CD8-positive, alpha-beta T cell (primary cell): ENCODE measurements at regions of chr2 and their contacts with region 1.

Region 1: DNA sequence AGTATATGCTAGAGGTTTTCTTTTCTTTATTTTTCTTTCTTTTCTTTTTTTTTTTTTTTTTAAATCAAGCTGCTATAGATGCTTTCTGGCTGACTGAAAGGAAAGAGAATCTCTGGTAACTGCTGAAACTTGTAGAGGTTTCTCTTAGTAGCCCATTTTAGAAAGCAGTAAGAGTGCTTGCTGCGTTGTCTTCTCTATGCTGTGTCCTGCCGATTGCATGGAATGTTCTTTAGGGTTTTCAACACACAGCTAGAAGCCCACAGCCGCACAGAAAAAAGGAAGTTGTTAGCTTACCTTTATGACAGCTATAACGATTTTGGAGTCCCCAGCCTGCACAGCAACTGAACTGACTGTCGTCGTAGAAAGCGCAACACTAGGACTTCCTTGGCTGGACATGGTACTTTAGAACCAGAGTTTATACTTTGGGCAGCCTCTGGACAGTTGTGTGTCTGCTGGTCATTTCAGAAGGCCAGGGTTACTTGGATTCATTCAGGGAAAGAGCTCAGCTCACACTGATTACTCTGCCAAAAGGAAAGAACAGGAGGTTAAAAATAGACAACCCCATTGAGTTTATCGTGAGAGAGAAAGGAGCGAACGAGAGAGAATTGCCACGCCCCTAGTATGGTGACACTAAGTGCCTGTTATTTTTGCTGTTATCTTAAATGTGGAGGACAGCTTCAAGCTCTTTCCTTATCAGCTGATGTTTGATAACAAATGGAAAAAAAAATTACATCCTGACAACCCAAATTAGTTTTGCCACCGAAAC is at the start of gene CCDC141:
- DNase-seq: peak in 6 of 9 experiments; percentile 5 to 65 (median 27)
- ATAC-seq: peak; percentile 74
- H3K4me3 ChIP-seq: peak within 1 kb of the TSS; percentile 49 to 67
- H3K4me3 Mint-ChIP-seq: peak within 1 kb of the TSS; percentile 95
- H3K27ac ChIP-seq: peak within 1 kb of the TSS; percentile 57 to 67
- H3K27ac Mint-ChIP-seq: peak within 1 kb of the TSS; percentile 97
- H3K4me1 ChIP-seq: peaks cover 18% of the 10 kb centered on the region
- H3K4me1 Mint-ChIP-seq: peaks cover 46% of the 10 kb centered on the region
- H3K27me3 ChIP-seq: no peaks in the 10 kb centered on the region
- H3K27me3 Mint-ChIP-seq: no peaks in the 10 kb centered on the region
- CTCF ChIP-seq: no peak
- total RNA-seq, gene CCDC141: 28.2 to 31.3 TPM

Region 2: DNA sequence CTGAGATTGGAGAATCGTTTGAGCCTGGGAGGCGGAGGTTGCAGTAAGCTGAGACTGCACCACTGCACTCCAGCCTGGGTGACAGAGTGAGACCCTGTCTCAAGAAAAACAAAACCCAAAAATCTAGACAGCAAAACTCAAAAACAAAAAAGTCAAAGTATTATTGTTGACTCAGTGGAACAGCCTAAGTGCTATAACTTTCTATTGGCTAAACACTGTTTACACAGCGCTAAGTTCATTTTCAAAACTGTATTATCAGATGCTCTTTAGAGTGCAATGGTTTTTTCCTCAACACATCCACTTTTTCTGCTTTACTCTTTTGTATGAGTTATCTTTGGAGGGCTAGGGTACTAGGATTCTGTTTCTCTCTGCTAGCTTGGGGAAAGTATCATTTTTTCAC is 85.9 kb after region 1 on chr2:
- CTCF ChIA-PET with region 1: no interaction called
- POLR2A ChIA-PET with region 1: no interaction called
- intact Hi-C with region 1: no loop called
- DNase-seq: no peak
- ATAC-seq: no peak
- H3K4me3 ChIP-seq: no peak overlapping the region
- H3K4me3 Mint-ChIP-seq: no peak overlapping the region
- H3K27ac ChIP-seq: no peak overlapping the region
- H3K27ac Mint-ChIP-seq: no peak overlapping the region
- H3K4me1 ChIP-seq: no peaks in the 10 kb centered on the region
- H3K4me1 Mint-ChIP-seq: no peaks in the 10 kb centered on the region
- H3K27me3 ChIP-seq: no peaks in the 10 kb centered on the region
- H3K27me3 Mint-ChIP-seq: no peaks in the 10 kb centered on the region
- CTCF ChIP-seq: no peak

Region 3: GRCh38 chr2:179253226-179253625 is 203.5 kb after region 1 on chr2:
- CTCF ChIA-PET with region 1: no interaction called
- POLR2A ChIA-PET with region 1: no interaction called
- intact Hi-C with region 1: loop called in 1 of 2 experiments (anchors 10 kb)
- DNase-seq: no peak
- ATAC-seq: no peak
- H3K4me3 ChIP-seq: no peak overlapping the region
- H3K4me3 Mint-ChIP-seq: no peak overlapping the region
- H3K27ac ChIP-seq: no peak overlapping the region
- H3K27ac Mint-ChIP-seq: no peak overlapping the region
- H3K4me1 ChIP-seq: no peaks in the 10 kb centered on the region
- H3K4me1 Mint-ChIP-seq: peaks cover 21% of the 10 kb centered on the region
- H3K27me3 ChIP-seq: no peaks in the 10 kb centered on the region
- H3K27me3 Mint-ChIP-seq: no peaks in the 10 kb centered on the region
- CTCF ChIP-seq: no peak